ENCODE measurements at regions of chr15 and their contacts with region 1.

Region 1: GRCh38 chr15:45587095-45587860 is at the start of gene BLOC1S6:
- DNase-seq: peak; percentile 78 to 80
- H3K4me3 ChIP-seq: peak within 1 kb of the TSS; percentile 96
- H3K27ac ChIP-seq: peak within 1 kb of the TSS; percentile 92
- H3K4me1 ChIP-seq: peaks cover 25% of the 10 kb centered on the region
- H3K27me3 ChIP-seq: no peaks in the 10 kb centered on the region
- CTCF ChIP-seq: no peak
- total RNA-seq, gene BLOC1S6: 22.7 and 29.4 TPM in 2 replicates

Region 2: DNA sequence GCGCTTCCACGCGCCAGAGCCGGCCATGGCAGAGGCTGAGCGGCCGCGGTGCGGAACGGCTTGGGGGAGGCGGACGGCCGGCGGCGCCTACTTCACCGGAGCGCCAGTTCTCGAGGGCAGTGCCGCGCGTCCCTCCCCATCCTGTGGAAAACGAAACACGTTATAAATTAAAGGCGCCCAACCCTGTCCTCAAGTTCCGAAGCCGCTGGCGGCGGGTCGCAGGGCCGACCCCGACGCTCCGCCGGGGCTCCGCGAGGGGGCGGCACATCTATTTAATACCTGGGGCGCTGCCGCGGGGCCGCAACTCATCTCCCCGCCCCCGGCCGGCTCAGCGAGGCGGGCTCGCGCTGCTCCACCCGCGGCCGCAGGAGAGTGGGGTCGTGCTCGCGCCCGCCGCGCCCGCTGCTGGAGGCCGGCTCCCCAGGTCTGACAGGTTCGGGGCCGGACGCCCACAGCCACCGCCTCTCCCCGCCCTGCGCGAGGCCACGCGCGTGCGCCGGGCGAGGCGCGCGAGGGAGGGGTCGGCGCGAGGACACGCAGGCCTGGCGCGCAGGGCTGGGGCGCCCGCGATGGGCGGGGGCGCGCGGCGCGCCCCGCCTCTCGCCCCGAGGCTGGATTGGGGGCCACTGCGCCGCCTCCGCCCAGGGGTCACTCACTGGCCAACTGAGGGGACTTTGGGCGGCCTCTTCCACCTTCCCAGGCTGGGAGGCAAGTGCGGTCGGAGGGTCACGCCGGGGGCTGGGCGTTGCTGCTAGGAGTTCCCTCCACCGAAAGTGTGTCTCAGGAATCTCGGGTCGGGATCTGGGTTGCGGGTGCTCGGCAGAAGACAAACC is 64.7 kb before region 1 on chr15 and contains the start of gene SLC30A4:
- CTCF ChIA-PET with region 1: no interaction called
- POLR2A ChIA-PET with region 1: no interaction called
- intact Hi-C with region 1: loop called (anchors 1 kb)
- DNase-seq: peak in 1 of 2 experiments; percentile 81
- H3K4me3 ChIP-seq: peak within 1 kb of the TSS; percentile 73
- H3K27ac ChIP-seq: no peak within 1 kb of the TSS
- H3K4me1 ChIP-seq: peaks cover 9% of the 10 kb centered on the region; the same call in 1 of the 2 replicates
- H3K27me3 ChIP-seq: no peaks in the 10 kb centered on the region
- CTCF ChIP-seq: no peak; the same call in 1 of the 2 replicates
- total RNA-seq, gene SLC30A4: 2.7 and 3.0 TPM in 2 replicates

Region 3: GRCh38 chr15:45573961-45574629 is 13.2 kb before region 1 on chr15:
- CTCF ChIA-PET with region 1: no interaction called
- POLR2A ChIA-PET with region 1: no interaction called
- intact Hi-C with region 1: no loop called
- DNase-seq: peak in 1 of 2 experiments; percentile 23
- H3K4me3 ChIP-seq: no peak overlapping the region
- H3K27ac ChIP-seq: no peak overlapping the region
- H3K4me1 ChIP-seq: no peaks in the 10 kb centered on the region
- H3K27me3 ChIP-seq: no peaks in the 10 kb centered on the region
- CTCF ChIP-seq: peak; percentile 46; the same call in 1 of the 2 replicates

Region 4: DNA sequence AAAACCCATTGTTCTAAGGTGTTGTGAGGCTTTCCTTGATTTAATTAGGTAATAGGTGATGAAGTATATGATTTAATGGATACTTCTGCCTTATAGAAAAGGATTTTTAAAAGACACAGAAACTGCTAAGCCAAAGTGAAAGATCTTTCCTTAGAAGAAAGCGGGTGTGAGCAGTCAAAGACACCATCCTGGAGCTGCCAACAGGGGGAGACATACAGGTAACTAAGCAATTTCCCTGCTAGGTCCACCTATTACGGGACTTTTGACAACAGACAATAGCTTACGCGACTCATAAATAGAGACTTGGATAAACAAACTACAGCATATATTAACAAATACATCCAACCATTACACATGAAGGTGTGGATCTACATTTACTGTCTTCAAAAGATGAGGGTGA is 717.0 kb after region 1 on chr15:
- CTCF ChIA-PET with region 1: interaction called, 11 read pairs
- POLR2A ChIA-PET with region 1: no interaction called
- intact Hi-C with region 1: no loop called
- DNase-seq: peak in 1 of 2 experiments; percentile 4
- H3K4me3 ChIP-seq: no peak overlapping the region
- H3K27ac ChIP-seq: no peak overlapping the region
- H3K4me1 ChIP-seq: no peaks in the 10 kb centered on the region
- H3K27me3 ChIP-seq: no peaks in the 10 kb centered on the region
- CTCF ChIP-seq: peak; percentile 70